Dorsolateral prefrontal cortex (tissue), 120 donors: ENCODE measurements at regions of chr9 and their contacts with region 1.

Region 1: DNA sequence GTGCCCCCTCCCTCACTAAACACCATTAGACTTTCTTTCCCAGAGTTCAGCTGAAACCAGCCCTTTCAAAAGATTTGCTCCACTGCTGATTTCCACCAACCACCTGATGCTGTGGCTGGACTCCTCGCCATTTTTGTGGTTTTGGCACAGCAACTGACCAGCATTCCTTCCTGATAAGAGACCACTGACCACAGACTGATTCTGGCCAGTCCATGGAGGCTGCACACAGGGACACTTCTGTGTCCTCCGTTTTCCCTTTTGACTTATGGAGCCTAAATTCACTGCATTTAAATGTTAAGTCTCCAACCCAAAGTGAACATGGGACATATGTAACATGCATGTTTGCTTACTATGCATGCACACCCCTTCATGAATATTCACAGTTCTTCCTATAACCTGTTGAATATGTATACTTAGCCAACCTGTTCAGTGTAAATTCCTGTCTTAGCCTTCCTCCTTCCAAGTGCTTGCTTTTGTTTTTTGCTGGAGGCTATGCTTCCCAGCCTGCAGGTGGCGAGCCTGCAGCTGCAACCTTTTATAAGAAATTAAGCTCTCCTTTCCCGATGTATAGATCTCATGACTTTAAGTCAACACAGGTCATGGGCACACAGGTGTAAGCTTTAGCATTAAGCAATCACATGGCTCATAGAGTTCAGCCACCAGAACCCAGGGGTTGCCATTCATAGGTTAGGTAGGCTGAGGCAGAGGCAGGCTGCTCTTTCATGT is 78.7 kb downstream of the ACTL7B start:
- DNase-seq: no peak
- H3K4me3 ChIP-seq: no peak overlapping the region
- H3K27ac ChIP-seq: peak overlapping the region in 9 of 59 donors; percentile 4 to 60 (median 50)
- H3K27me3 ChIP-seq: peaks cover 0 to 4% (median 0%) of the 10 kb centered on the region in 45 donors
- CTCF ChIP-seq: no peak

Region 2: DNA sequence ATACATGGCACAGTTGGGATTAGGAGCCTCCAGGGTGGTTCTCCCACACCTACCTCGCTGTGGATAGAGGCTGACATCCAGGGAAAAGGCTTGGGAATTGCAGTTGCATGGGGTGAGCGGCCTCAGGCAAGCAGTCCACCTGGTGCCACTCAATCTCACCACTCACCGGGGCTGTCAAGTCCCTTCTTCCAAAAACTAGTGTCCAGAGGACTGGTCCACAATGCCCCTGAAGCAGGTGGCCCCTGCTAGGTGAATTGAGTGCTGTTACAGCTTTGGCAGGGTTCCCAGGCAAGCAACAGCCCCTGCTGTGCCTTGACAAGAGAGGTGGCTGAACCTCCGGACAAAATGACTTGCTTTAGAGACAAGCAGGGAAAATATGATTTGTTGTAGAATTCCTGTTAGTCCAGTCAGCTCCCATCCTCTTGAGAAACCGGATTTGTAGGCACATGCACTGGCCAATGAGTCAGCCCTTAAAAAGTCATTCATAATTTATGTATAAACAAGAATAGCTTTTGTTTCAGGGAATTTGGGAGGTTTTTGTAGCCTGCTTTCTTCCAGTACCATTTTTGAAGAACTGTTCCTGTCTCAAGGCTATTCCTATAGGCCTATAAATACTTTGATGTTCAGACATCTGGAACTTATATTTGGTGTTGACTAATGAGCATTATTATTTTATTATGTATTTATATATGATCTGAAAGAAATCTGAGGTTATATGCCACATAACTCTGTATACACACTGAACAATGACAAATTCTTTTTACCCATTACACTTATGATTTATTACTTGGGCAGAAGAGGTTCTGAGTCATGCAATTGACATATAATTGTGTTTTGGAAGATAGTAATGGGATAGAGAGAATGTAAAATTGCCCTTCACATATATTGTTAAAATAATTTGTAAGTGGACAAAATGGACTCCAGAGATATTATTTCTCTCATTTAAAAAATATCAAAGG is 332.4 kb before region 1 on chr9:
- intact Hi-C with region 1: loop called in 1 of 2 experiments (anchors 10 kb)
- DNase-seq: no peak
- H3K4me3 ChIP-seq: no peak overlapping the region
- H3K27ac ChIP-seq: peak overlapping the region in 28 of 59 donors; percentile 5 to 89 (median 70)
- H3K27me3 ChIP-seq: no peaks in the 10 kb centered on the region
- CTCF ChIP-seq: no peak